ENCODE measurements at regions of chr10 and their contacts with region 1.

Region 1: GRCh38 chr10:64148607-64149006 is 627.4 kb downstream of the REEP3 start:
- DNase-seq: no peak
- H3K4me3 ChIP-seq: no peak overlapping the region
- H3K27ac ChIP-seq: no peak overlapping the region
- H3K4me1 ChIP-seq: no peaks in the 10 kb centered on the region
- H3K27me3 ChIP-seq: no peaks in the 10 kb centered on the region
- CTCF ChIP-seq: no peak

Region 2: DNA sequence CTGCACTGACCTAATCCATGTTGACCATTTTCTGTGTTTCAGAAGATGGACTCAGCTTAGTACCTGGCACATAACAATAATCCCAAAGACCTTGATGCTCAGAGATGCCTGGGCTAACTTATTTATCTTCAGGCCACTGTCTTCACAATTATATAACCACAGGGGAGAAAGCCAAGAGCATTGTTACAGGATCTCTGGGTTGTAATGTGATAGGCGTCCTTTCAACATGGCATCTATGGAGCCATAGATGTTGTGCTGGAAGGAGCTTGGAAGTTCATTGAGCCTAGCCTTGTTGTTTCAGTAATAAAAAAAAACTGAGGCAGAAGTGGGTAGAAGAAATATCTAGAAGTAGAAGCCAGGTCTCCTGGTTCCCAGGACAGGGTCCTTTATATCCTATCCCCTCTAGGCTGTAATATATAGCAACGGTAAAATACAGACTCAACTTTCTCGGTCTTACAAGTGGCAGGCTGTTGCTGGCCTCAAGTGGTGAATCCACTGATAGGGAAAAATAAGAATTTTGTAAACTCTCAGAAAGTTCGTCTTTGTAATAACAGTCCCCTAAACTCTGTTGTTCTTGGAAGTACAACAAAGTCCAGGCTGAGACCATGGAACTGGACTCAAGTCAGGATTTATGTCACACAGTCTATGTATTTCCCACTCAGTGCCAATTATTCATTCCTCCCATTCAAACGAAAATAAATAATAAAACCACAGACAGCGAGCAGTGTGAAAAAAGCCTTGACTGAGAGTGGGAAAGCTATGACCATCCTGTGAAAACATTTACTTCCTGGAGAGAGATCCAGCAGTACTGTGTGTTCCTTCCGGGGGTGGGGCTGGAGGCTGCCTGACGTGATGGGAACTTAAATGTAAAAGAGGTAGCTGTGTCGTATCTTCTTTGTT is 349.8 kb before region 1 on chr10:
- CTCF ChIA-PET with region 1: no interaction called
- dilution Hi-C with region 1: no loop called
- in situ Hi-C with region 1: no loop called
- intact Hi-C with region 1: no loop called
- DNase-seq: peak; percentile 57
- H3K4me3 ChIP-seq: no peak overlapping the region
- H3K27ac ChIP-seq: no peak overlapping the region
- H3K4me1 ChIP-seq: peaks cover 7% of the 10 kb centered on the region
- H3K27me3 ChIP-seq: no peaks in the 10 kb centered on the region
- CTCF ChIP-seq: no peak

Region 3: DNA sequence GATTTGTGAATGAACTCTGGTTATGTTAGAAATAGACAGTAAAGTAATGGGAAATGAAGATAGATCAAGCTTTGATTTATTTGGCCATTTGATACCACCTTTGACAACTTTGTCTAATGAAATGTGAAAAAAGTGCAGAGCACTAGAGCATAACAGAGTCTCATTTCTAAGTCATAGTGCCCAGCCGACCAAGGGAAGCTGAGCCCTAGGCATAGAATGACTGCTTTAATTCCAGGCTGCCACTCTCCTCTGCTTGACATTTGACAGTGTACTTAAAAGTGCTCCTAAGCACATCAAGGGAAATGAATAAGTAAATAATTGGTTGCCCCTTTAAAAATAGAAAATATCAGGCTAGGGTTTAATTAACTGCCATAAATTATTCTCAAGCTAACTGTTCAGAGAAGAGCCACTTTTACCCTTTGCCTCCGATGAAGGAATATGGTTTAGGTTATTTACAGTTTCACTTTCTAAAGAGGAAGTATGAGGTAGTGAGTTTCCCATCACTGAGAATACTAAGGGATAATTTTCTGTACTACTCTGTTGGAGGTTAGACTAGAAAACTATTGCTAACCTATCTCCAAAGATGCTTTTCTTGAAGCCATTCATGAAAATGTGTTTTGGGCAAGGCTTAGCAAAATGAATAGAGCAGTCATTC is 35.8 kb before region 1 on chr10:
- CTCF ChIA-PET with region 1: no interaction called
- dilution Hi-C with region 1: loop called (anchors 5 kb)
- in situ Hi-C with region 1: no loop called
- intact Hi-C with region 1: no loop called
- DNase-seq: no peak
- H3K4me3 ChIP-seq: no peak overlapping the region
- H3K27ac ChIP-seq: no peak overlapping the region
- H3K4me1 ChIP-seq: no peaks in the 10 kb centered on the region
- H3K27me3 ChIP-seq: no peaks in the 10 kb centered on the region
- CTCF ChIP-seq: no peak